Esophagus muscularis mucosa (tissue), 4 donors: ENCODE measurements at regions of chr16 and their contacts with region 1.

Region 1: DNA sequence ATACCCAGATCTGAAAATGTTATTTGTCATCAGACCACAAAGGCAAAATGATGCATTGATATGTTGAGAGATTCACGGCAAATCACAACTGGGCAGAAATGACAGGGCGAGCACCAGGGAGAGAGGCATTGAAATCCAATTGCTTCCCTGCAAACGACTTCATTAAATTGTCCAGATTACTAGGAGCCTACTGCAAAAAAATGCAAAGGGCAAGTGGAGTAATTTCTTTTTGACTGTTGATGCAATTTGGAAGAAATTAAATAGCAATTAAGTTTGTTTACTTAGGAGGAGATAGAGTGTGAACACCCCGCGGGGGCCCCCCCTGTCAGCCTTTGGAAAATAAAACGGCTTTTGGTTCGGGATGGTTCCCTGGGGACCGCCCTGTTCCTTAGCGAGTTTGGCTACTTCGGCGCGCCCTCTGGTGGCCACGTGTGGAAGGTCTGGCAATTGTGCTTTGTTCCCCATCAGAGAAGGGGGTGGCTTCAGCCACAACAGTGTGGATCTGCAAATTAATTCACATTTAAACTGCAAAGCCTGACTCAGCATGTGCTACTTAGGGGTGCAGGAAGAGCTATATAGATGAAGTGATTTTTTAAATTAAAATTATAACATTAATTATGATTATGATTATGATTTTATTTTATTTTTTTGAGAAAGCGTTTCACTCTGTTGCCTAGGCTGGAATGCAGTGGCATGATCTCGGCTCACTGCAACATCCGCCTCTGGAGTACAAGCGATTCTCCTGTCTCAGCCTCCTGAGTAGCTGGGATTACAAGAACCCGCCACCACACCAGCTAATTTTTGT is 14.5 kb upstream of the TMC7 start:
- DNase-seq: peak; percentile 97
- H3K4me3 ChIP-seq: peak overlapping the region; percentile 28 to 41 (median 37)
- H3K27ac ChIP-seq: no peak overlapping the region
- H3K4me1 ChIP-seq: peaks cover 0 to 8% (median 5%) of the 10 kb centered on the region in 4 donors
- H3K27me3 ChIP-seq: no peaks in the 10 kb centered on the region
- CTCF ChIP-seq: peak; percentile 90 to 94 (median 93)
- EP300 ChIP-seq: no peak
- POLR2A ChIP-seq: no peak

Region 2: GRCh38 chr16:18801197-18801972 is 167.9 kb before region 1 on chr16 and contains the start of gene ARL6IP1:
- intact Hi-C with region 1: loop called (anchors 2 kb)
- DNase-seq: peak; percentile 100
- H3K4me3 ChIP-seq: peak within 1 kb of the TSS; percentile 75 to 97 (median 84)
- H3K27ac ChIP-seq: peak within 1 kb of the TSS; percentile 84 to 95 (median 91)
- H3K4me1 ChIP-seq: peaks cover 28 to 58% (median 47%) of the 10 kb centered on the region in 4 donors
- H3K27me3 ChIP-seq: no peaks in the 10 kb centered on the region
- CTCF ChIP-seq: peak; percentile 90 to 95 (median 95)
- EP300 ChIP-seq: no peak
- POLR2A ChIP-seq: peak; percentile 91
- total RNA-seq, gene ARL6IP1: 53.4 to 146 (median 91.2) TPM

Region 3: GRCh38 chr16:18932243-18932981 is 36.8 kb before region 1 on chr16:
- intact Hi-C with region 1: loop called (anchors 5 kb)
- DNase-seq: no peak
- H3K4me3 ChIP-seq: no peak overlapping the region
- H3K27ac ChIP-seq: peak overlapping the region; percentile 60 to 77 (median 69)
- H3K4me1 ChIP-seq: peaks cover 7 to 21% (median 20%) of the 10 kb centered on the region in 4 donors
- H3K27me3 ChIP-seq: no peaks in the 10 kb centered on the region
- CTCF ChIP-seq: no peak
- EP300 ChIP-seq: no peak
- POLR2A ChIP-seq: no peak

Region 4: GRCh38 chr16:19105891-19106624 is 136.8 kb after region 1 on chr16:
- intact Hi-C with region 1: no loop called
- DNase-seq: no peak
- H3K4me3 ChIP-seq: no peak overlapping the region
- H3K27ac ChIP-seq: no peak overlapping the region
- H3K4me1 ChIP-seq: peaks cover 0 to 13% (median 5%) of the 10 kb centered on the region in 4 donors
- H3K27me3 ChIP-seq: no peaks in the 10 kb centered on the region
- CTCF ChIP-seq: no peak
- EP300 ChIP-seq: no peak
- POLR2A ChIP-seq: no peak